Dorsolateral prefrontal cortex (tissue), 120 donors: ENCODE measurements at regions of chr9 and their contacts with region 1.

Region 1: GRCh38 chr9:129258124-129258822 is 80.2 kb upstream of the IER5L start:
- DNase-seq: peak; percentile 85 to 97 (median 94)
- H3K4me3 ChIP-seq: peak overlapping the region; percentile 18 to 66 (median 52)
- H3K27ac ChIP-seq: peak overlapping the region in 50 of 59 donors; percentile 2 to 86 (median 64)
- H3K27me3 ChIP-seq: no peaks in the 10 kb centered on the region
- CTCF ChIP-seq: no peak

Region 2: DNA sequence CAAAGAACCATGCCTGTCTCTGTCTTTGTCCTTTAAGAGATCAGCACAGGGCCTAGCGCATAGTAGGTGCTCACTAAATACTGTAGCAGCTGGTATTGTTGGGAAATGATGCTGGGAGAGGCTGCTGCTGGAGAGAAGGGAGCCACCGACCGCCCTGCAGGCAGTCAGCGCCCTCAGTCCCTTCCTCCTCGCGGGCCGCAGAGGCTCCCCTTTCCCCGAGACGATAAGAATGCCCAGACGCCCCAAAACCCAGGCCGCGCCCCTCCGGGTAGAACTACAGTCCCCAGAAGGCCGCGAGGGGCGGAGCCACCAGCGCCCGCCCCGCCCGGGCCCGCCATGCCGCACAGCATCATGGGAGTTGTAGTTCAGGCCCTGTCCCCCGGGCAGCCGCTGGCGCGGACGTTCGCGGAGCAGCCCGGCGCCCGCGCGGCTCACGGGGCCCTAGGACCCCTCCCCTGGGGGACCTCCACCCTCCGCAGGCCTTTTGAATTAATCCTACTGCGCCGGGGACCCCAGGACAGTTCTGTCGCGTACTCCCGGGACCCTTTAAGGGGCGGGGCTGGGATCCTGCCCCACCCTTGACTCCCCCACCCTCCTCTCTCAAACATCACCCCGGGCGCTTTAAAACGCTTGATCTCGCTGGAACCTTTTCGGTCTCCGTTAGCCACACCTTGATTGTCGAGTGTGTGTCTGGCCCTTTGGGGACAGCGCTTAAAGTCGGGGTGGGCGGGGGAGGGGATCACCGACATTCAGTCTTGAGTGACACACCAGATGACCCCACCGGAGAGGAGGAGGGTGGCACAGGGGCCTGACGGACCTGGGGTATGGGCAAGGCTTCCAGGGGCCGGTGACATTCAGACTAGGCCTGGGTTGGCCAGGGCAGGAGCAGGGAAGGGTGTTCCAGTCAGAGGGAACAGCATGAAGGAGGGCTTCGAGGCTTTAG is 55.4 kb before region 1 on chr9:
- intact Hi-C with region 1: loop called (anchors 5 kb)
- DNase-seq: peak; percentile 82 to 94 (median 88)
- H3K4me3 ChIP-seq: peak overlapping the region; percentile 59 to 100 (median 83)
- H3K27ac ChIP-seq: peak overlapping the region; percentile 73 to 99 (median 95)
- H3K27me3 ChIP-seq: no peaks in the 10 kb centered on the region
- CTCF ChIP-seq: peak in 36 of 56 donors; percentile 8 to 56 (median 36)